ENCODE measurements at regions of chr21 and their contacts with region 1.

Region 1: GRCh38 chr21:34693192-34693810 is 24.5 kb downstream of the CLIC6 start:
- DNase-seq: peak in 4 of 5 donors; percentile 20 to 52 (median 30)
- H3K4me3 ChIP-seq: no peak overlapping the region
- H3K4me3 Mint-ChIP-seq: no peak overlapping the region
- H3K27ac ChIP-seq: no peak overlapping the region
- H3K27ac Mint-ChIP-seq: no peak overlapping the region
- H3K4me1 ChIP-seq: no peaks in the 10 kb centered on the region
- H3K4me1 Mint-ChIP-seq: peaks cover 3 to 5% (median 4%) of the 10 kb centered on the region in 3 donors
- H3K27me3 ChIP-seq: no peaks in the 10 kb centered on the region
- H3K27me3 Mint-ChIP-seq: peaks cover 8 to 37% of the 10 kb centered on the region in 2 donors

Region 2: GRCh38 chr21:34745557-34746255 is 52.4 kb after region 1 on chr21:
- CTCF ChIA-PET with region 1: no interaction called
- POLR2A ChIA-PET with region 1: no interaction called
- DNase-seq: peak; percentile 6 to 57 (median 32)
- H3K4me3 ChIP-seq: no peak overlapping the region
- H3K4me3 Mint-ChIP-seq: peak overlapping the region in 6 of 7 donors; percentile 11 to 70 (median 59)
- H3K27ac ChIP-seq: no peak overlapping the region
- H3K27ac Mint-ChIP-seq: peak overlapping the region in 2 of 8 donors; percentile 2 to 68
- H3K4me1 ChIP-seq: no peaks in the 10 kb centered on the region
- H3K4me1 Mint-ChIP-seq: peaks cover 3 to 5% (median 4%) of the 10 kb centered on the region in 3 donors
- H3K27me3 ChIP-seq: no peaks in the 10 kb centered on the region
- H3K27me3 Mint-ChIP-seq: peaks cover 4 to 24% of the 10 kb centered on the region in 2 donors

Region 3: DNA sequence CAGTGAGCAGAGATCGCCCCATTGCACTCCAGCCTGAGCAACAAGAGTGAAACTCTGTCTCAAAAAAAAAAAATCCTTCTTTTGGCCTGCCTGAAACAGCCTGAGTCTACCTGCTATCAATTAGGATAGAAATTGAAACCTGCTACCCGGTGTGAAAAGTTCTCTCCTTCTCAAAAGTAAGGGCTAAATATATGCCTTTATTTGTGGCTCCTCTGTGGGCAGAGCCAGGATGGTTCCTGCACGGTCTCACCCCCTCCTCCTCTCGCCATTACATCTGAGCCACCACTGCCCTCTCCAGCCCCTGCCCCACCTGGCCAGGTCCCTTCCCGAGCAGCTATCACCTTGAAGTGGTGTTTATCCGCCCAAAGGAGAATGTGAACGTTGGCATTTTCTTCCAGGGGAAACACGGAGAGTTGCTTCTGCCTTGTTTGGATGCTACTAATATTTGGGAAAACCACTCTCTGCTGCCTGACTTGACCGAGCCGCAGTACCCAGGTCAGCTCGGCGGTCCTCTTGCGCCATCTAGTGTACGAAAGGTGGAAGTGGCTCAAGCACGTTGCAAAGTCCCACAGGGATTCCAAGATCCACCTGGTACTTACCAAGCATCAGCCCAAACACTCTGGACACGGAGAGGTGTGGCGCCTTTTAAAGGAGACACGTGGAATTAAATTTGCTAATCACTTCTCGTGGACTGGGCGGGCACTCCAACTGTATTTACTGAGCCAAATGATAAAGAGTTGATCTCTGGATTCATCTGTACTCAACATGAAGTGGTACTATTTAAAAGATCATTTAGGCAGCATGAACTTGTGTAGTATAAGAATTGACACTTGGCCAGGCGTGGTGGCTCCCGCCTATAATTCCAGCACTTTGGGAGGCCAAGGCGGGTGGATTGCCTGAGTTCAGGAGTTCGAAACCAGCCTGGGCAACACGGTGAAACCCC is 1335.1 kb after region 1 on chr21:
- CTCF ChIA-PET with region 1: interaction called, 22 read pairs
- POLR2A ChIA-PET with region 1: no interaction called
- DNase-seq: peak; percentile 41 to 74 (median 53)
- H3K4me3 ChIP-seq: no peak overlapping the region
- H3K4me3 Mint-ChIP-seq: peak overlapping the region in 1 of 7 donors; percentile 33
- H3K27ac ChIP-seq: no peak overlapping the region
- H3K27ac Mint-ChIP-seq: peak overlapping the region in 2 of 8 donors; percentile 6 to 9
- H3K4me1 ChIP-seq: peaks cover 4% of the 10 kb centered on the region
- H3K4me1 Mint-ChIP-seq: peaks cover 5 to 6% (median 6%) of the 10 kb centered on the region in 3 donors
- H3K27me3 ChIP-seq: no peaks in the 10 kb centered on the region
- H3K27me3 Mint-ChIP-seq: no peaks in the 10 kb centered on the region